ENCODE measurements at regions of chr2 and their contacts with region 1.

Region 1: GRCh38 chr2:15939854-15940660 is at the start of gene MYCN:
- DNase-seq: peak; percentile 34 to 63
- H3K4me3 ChIP-seq: peak within 1 kb of the TSS; percentile 43 to 79 (median 54)
- H3K27ac ChIP-seq: no peak within 1 kb of the TSS
- H3K4me1 ChIP-seq: peaks cover 3 to 20% of the 10 kb centered on the region in 2 donors
- H3K27me3 ChIP-seq: peaks cover 3 to 32% of the 10 kb centered on the region in 2 donors
- CTCF ChIP-seq: peak in 1 of 3 donors; percentile 63
- POLR2A ChIP-seq: no peak
- total RNA-seq, gene MYCN: 0.32 to 0.98 (median 0.59) TPM

Region 2: GRCh38 chr2:16739778-16740581 is 799.9 kb after region 1 on chr2:
- intact Hi-C with region 1: loop called (anchors 10 kb)
- DNase-seq: peak in 1 of 2 donors; percentile 89
- H3K4me3 ChIP-seq: no peak overlapping the region
- H3K27ac ChIP-seq: peak overlapping the region; percentile 20 to 36
- H3K4me1 ChIP-seq: peaks cover 0 to 8% of the 10 kb centered on the region in 2 donors
- H3K27me3 ChIP-seq: no peaks in the 10 kb centered on the region
- CTCF ChIP-seq: no peak
- POLR2A ChIP-seq: no peak